ENCODE measurements at regions of chr20 and their contacts with region 1.

Region 1: GRCh38 chr20:3854462-3854871 is 7.8 kb downstream of the MAVS start:
- DNase-seq: no peak
- H3K4me3 ChIP-seq: no peak overlapping the region
- H3K27ac ChIP-seq: no peak overlapping the region
- H3K4me1 ChIP-seq: no peaks in the 10 kb centered on the region; a peak in 1 of 7 replicates
- H3K27me3 ChIP-seq: no peaks in the 10 kb centered on the region
- CTCF ChIP-seq: no peak
- EP300 ChIP-seq: no peak
- POLR2A ChIP-seq: no peak
- RAD21 ChIP-seq: no peak

Region 2: DNA sequence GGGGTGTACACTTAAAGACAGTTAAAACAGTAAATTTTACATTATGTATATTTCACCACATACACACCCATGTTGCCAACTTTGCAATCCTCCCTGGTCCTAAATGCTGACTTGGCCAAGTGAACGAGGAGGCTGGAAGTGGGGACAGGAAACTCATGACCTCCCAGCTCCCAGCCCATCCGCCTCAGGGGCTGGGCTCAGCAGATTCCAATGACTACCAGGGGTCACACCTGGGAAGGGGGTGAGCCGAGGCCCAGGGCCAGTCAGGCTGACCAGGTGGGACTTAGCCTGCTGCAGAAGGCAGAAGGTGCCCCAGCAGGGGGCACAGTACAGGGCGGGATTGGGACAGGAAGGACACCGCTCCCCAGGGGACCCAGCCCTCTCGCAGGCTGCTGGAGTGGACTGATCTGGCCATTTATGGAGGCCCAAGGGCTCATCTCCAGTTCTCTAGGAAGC is 144.4 kb before region 1 on chr20:
- CTCF ChIA-PET with region 1: no interaction called
- POLR2A ChIA-PET with region 1: no interaction called
- DNase-seq: no peak
- H3K4me3 ChIP-seq: no peak overlapping the region
- H3K27ac ChIP-seq: no peak overlapping the region
- H3K4me1 ChIP-seq: no peaks in the 10 kb centered on the region
- H3K27me3 ChIP-seq: no peaks in the 10 kb centered on the region; a peak in 1 of 7 replicates
- CTCF ChIP-seq: no peak
- EP300 ChIP-seq: no peak
- POLR2A ChIP-seq: no peak
- RAD21 ChIP-seq: no peak

Region 3: GRCh38 chr20:3781153-3781910 is 73.1 kb before region 1 on chr20 and contains the start of gene SPEF1:
- CTCF ChIA-PET with region 1: interaction called, 30 read pairs
- POLR2A ChIA-PET with region 1: interaction called, 7 read pairs
- DNase-seq: peak; percentile 81 to 84
- H3K4me3 ChIP-seq: peak within 1 kb of the TSS; percentile 6 to 53 (median 43); a peak in 7 of 8 replicates
- H3K27ac ChIP-seq: no peak within 1 kb of the TSS
- H3K4me1 ChIP-seq: peaks cover 0 to 23% (median 15%) of the 10 kb centered on the region in 4 experiments; a peak in 6 of 7 replicates
- H3K27me3 ChIP-seq: peaks cover 0 to 30% (median 26%) of the 10 kb centered on the region in 4 experiments; a peak in 6 of 7 replicates
- CTCF ChIP-seq: peak; percentile 41 to 71 (median 59); a peak in 3 of 4 replicates
- EP300 ChIP-seq: no peak
- POLR2A ChIP-seq: no peak
- RAD21 ChIP-seq: peak; percentile 38 to 39
- total RNA-seq, gene SPEF1: 0.65 and 0.71 TPM in 2 replicates

Region 4: GRCh38 chr20:3786665-3787323 is 67.7 kb before region 1 on chr20 and contains the start of gene CENPB:
- CTCF ChIA-PET with region 1: interaction called, 30 read pairs
- POLR2A ChIA-PET with region 1: interaction called, 7 read pairs
- DNase-seq: peak in 1 of 2 experiments; percentile 96
- H3K4me3 ChIP-seq: peak within 1 kb of the TSS; percentile 42 to 69 (median 60)
- H3K27ac ChIP-seq: no peak within 1 kb of the TSS
- H3K4me1 ChIP-seq: peaks cover 0 to 13% (median 6%) of the 10 kb centered on the region in 4 experiments; a peak in 6 of 7 replicates
- H3K27me3 ChIP-seq: peaks cover 0 to 3% (median 0%) of the 10 kb centered on the region in 4 experiments; a peak in 3 of 7 replicates
- CTCF ChIP-seq: peak; percentile 63 to 99 (median 92)
- EP300 ChIP-seq: no peak
- POLR2A ChIP-seq: no peak
- RAD21 ChIP-seq: peak; percentile 76 to 86
- total RNA-seq, gene CENPB: 51.6 and 52.8 TPM in 2 replicates

Region 5: DNA sequence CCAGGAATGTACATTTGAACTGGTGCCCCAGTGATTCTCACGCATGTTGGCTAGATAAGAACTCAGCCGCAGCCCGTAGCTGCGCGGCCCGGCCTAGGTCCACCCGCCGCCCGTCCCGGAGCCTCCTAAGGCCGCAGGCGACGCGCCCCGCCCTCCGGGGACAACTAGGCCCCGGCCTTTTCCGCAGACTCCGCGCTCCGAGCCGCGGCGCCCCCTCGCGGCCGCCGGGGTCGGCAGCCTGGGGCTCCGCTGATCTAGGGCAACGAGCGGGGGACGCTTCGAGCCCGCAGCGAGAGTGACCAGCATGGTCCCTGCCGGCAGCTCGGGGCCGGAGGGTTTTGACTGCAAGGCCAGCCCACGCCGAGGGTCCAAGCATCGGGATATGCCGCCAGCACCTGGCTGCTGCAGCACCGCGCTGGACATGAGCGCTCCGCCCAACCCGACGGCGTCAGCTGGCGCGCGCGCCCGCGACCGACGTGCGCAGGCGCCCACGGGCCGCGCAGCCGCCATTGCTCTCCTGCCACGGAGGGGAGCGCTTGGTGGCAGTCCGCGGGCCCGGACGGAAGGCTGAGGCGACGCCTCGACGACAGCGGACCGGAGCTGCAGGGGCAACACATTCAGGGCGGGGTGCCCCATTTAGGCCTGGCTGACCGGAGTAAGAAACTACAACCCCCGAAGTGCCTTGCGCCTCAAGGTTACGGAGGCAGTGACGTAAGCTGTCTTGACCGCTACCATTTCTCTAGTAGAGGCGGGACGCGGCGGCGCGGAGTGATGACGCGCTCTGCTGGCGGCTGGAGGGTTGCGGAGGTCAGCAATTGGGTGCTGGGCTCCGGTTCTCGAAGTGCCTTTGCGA is 34.2 kb before region 1 on chr20 and contains the start of gene AP5S1:
- CTCF ChIA-PET with region 1: interaction called, 36 read pairs
- POLR2A ChIA-PET with region 1: interaction called, 4 read pairs
- DNase-seq: peak; percentile 89 to 98
- H3K4me3 ChIP-seq: peak within 1 kb of the TSS; percentile 79 to 96 (median 90)
- H3K27ac ChIP-seq: peak within 1 kb of the TSS; percentile 92
- H3K4me1 ChIP-seq: peaks cover 0 to 13% (median 5%) of the 10 kb centered on the region in 4 experiments; a peak in 4 of 7 replicates
- H3K27me3 ChIP-seq: no peaks in the 10 kb centered on the region
- CTCF ChIP-seq: peak; percentile 83 to 96 (median 88)
- EP300 ChIP-seq: peak in 1 of 2 experiments; percentile 36; a peak in 1 of 3 replicates
- POLR2A ChIP-seq: peak; percentile 76 to 83
- RAD21 ChIP-seq: peak; percentile 69 to 81
- total RNA-seq, gene AP5S1: 3.4 and 3.7 TPM in 2 replicates

Region 6: GRCh38 chr20:3825526-3825925 is 28.9 kb before region 1 on chr20:
- CTCF ChIA-PET with region 1: interaction called, 36 read pairs
- POLR2A ChIA-PET with region 1: interaction called, 4 read pairs
- DNase-seq: no peak
- H3K4me3 ChIP-seq: no peak overlapping the region
- H3K27ac ChIP-seq: no peak overlapping the region
- H3K4me1 ChIP-seq: peaks cover 0 to 3% (median 1%) of the 10 kb centered on the region in 4 experiments; a peak in 1 of 7 replicates
- H3K27me3 ChIP-seq: no peaks in the 10 kb centered on the region
- CTCF ChIP-seq: peak; percentile 32 to 50 (median 36); a peak in 3 of 4 replicates
- EP300 ChIP-seq: no peak
- POLR2A ChIP-seq: no peak
- RAD21 ChIP-seq: no peak; a peak in 1 of 4 replicates

Region 7: GRCh38 chr20:3864518-3864917 is 10.1 kb after region 1 on chr20:
- CTCF ChIA-PET with region 1: interaction called, 55 read pairs
- POLR2A ChIA-PET with region 1: interaction called, 4 read pairs
- DNase-seq: no peak
- H3K4me3 ChIP-seq: no peak overlapping the region
- H3K27ac ChIP-seq: no peak overlapping the region
- H3K4me1 ChIP-seq: no peaks in the 10 kb centered on the region
- H3K27me3 ChIP-seq: no peaks in the 10 kb centered on the region
- CTCF ChIP-seq: no peak
- EP300 ChIP-seq: no peak
- POLR2A ChIP-seq: no peak
- RAD21 ChIP-seq: no peak

Region 8: DNA sequence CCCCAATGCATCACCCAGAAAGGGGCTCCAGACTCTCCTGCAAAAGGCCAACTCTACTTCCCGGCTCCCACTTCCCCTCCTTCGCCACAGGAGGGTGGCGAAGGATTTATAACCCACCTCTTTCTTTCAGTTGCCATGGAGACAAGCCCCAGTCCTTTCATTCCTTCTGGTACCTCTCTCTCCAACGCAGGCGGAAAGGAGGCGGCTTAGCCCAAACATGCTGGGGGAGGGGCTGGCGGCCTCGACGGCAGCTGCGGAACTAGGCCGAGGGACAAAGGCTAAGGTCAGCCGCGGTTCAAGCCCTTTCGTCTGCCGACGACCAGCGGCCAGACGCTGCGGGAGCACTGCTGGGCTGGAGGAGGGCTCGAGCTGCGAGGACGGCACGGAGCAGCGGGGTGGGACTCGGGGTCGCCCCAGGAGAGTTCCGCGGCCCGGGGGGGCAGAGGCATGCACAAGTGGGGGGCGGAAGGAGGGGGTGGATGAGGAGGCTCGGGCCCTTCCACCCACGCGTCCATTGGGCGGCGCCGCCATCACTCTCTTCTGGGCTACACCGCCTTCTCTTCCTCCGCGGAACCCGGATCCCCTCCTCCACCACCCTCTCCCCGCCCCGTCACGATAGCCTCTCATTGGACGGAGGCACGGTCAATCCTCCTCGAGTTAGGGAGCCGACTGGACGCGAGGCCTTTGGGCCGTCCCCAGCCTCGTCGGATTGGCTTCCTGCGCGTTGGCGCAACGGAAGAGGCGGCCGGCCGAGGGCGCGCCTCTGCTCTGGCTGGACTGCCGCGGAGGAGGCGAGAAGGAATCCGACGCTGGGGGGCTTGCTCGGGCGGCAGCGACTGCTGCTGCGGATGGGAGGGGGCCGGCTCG is 34.4 kb after region 1 on chr20 and contains the start of gene PANK2:
- CTCF ChIA-PET with region 1: interaction called, 12 read pairs
- POLR2A ChIA-PET with region 1: interaction called, 3 read pairs
- DNase-seq: peak; percentile 91 to 98
- H3K4me3 ChIP-seq: peak within 1 kb of the TSS; percentile 68 to 100 (median 96)
- H3K27ac ChIP-seq: peak within 1 kb of the TSS; percentile 95
- H3K4me1 ChIP-seq: peaks cover 0 to 8% (median 5%) of the 10 kb centered on the region in 4 experiments; a peak in 4 of 7 replicates
- H3K27me3 ChIP-seq: no peaks in the 10 kb centered on the region; a peak in 1 of 7 replicates
- CTCF ChIP-seq: peak; percentile 18 to 31 (median 20); a peak in 3 of 4 replicates
- EP300 ChIP-seq: no peak
- POLR2A ChIP-seq: peak; percentile 81 to 91
- RAD21 ChIP-seq: peak; percentile 22 to 40
- total RNA-seq, gene PANK2: 57.5 and 62.0 TPM in 2 replicates

Region 9: DNA sequence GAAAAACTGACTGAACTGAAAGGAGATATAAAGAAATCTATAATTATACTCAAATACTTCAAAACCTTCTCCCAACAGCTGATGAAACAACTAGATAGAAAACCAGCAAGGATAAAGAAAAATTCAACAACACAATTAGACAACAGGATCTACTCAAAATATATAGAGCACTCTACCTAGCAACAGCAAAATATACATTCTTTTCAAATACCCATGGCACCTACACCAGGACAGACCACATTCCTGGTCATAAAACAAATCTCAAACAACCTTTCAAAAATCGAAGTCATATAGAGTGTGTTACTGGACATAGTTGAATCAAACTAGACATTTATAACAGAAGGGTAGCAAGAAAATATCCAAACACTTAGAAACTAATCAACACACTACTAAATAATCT is 117.7 kb after region 1 on chr20:
- CTCF ChIA-PET with region 1: no interaction called
- POLR2A ChIA-PET with region 1: no interaction called
- DNase-seq: no peak
- H3K4me3 ChIP-seq: no peak overlapping the region
- H3K27ac ChIP-seq: no peak overlapping the region
- H3K4me1 ChIP-seq: 0 out of 7 replicates have a peak, but pooled peaks cover 0 to 2% (median 0%) of the 10 kb centered on the region in 4 experiments
- H3K27me3 ChIP-seq: no peaks in the 10 kb centered on the region
- CTCF ChIP-seq: no peak
- EP300 ChIP-seq: no peak
- POLR2A ChIP-seq: no peak
- RAD21 ChIP-seq: no peak